WTC11 (cell line): ENCODE measurements at regions of chr9 and their contacts with region 1.

Region 1: GRCh38 chr9:127943731-127944144 is 6.1 kb upstream of the DPM2 start:
- DNase-seq: peak; percentile 96
- ATAC-seq: peak; percentile 84
- H3K4me3 Mint-ChIP-seq: no peak overlapping the region
- H3K27ac Mint-ChIP-seq: peak overlapping the region; percentile 58
- H3K4me1 Mint-ChIP-seq: peaks cover 22% of the 10 kb centered on the region
- H3K27me3 Mint-ChIP-seq: no peaks in the 10 kb centered on the region
- CTCF ChIP-seq: peak; percentile 84

Region 2: DNA sequence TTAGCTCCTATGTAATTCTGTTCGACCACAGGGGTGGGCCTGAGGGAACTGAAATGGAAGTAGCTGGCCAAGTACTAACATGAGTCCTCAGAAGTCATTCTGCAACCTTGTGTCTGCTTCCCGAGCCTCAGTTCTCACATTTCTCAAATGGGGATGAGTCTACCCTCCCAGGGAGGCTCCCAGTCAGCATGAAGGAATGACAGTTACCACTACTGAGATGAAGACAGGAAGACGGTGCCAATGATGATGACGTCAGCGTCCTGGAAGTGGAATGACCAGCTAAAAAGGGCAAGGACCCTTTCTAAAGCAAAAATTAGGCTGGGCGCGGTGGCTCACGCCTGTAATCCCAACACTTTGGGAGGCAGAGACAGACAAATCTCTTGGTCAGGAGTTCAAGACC is 20.0 kb before region 1 on chr9:
- CTCF ChIA-PET with region 1: interaction called, 78 read pairs
- POLR2A ChIA-PET with region 1: no interaction called
- DNase-seq: no peak
- ATAC-seq: no peak
- H3K4me3 Mint-ChIP-seq: no peak overlapping the region
- H3K27ac Mint-ChIP-seq: no peak overlapping the region
- H3K4me1 Mint-ChIP-seq: peaks cover 7% of the 10 kb centered on the region
- H3K27me3 Mint-ChIP-seq: peaks cover 24% of the 10 kb centered on the region
- CTCF ChIP-seq: no peak

Region 3: DNA sequence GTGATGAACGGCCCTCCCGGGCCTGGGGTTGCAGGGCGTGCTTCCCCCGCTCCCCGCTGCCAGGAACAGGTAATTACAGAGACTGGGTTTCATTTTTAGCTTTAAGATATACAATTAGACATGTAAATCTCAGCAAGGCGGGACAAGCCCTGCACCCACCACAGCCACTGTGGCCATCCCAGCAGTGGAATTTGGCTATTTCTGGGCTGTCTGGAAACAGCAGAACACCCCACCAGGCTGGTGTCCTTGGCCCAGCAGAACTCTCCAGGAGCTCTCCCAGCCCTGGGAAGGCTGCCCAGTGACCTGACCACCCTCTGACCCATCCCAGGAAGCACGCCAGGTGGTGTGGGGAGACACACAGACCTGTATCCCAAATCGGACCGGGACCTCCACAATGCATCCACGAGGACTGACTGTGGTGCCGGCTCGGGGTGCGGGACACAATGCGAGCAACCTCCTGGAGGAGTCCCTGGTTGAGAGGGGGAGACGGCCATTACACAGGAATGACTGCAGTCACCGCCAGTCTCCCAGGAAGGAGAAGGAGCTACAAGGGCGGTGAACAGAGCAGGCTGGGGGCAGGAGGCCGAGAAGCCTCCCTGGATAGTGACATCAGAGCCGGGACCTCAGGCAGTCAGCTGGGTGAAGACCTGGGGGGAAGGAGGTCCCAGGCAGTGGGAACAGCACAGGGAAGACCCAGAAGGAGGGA is 19.8 kb after region 1 on chr9:
- CTCF ChIA-PET with region 1: interaction called, 121 read pairs
- POLR2A ChIA-PET with region 1: no interaction called
- DNase-seq: no peak
- ATAC-seq: no peak
- H3K4me3 Mint-ChIP-seq: no peak overlapping the region
- H3K27ac Mint-ChIP-seq: peak overlapping the region; percentile 53; the same call in 1 of the 2 replicates
- H3K4me1 Mint-ChIP-seq: peaks cover 71% of the 10 kb centered on the region
- H3K27me3 Mint-ChIP-seq: no peaks in the 10 kb centered on the region
- CTCF ChIP-seq: no peak

Region 4: GRCh38 chr9:128007566-128008138 is 63.9 kb after region 1 on chr9:
- CTCF ChIA-PET with region 1: interaction called, 12 read pairs
- POLR2A ChIA-PET with region 1: no interaction called
- DNase-seq: no peak
- ATAC-seq: no peak
- H3K4me3 Mint-ChIP-seq: no peak overlapping the region
- H3K27ac Mint-ChIP-seq: peak overlapping the region; percentile 87
- H3K4me1 Mint-ChIP-seq: peaks cover 14% of the 10 kb centered on the region
- H3K27me3 Mint-ChIP-seq: peaks cover 4% of the 10 kb centered on the region; the same call in 1 of the 2 replicates
- CTCF ChIP-seq: no peak

Region 5: DNA sequence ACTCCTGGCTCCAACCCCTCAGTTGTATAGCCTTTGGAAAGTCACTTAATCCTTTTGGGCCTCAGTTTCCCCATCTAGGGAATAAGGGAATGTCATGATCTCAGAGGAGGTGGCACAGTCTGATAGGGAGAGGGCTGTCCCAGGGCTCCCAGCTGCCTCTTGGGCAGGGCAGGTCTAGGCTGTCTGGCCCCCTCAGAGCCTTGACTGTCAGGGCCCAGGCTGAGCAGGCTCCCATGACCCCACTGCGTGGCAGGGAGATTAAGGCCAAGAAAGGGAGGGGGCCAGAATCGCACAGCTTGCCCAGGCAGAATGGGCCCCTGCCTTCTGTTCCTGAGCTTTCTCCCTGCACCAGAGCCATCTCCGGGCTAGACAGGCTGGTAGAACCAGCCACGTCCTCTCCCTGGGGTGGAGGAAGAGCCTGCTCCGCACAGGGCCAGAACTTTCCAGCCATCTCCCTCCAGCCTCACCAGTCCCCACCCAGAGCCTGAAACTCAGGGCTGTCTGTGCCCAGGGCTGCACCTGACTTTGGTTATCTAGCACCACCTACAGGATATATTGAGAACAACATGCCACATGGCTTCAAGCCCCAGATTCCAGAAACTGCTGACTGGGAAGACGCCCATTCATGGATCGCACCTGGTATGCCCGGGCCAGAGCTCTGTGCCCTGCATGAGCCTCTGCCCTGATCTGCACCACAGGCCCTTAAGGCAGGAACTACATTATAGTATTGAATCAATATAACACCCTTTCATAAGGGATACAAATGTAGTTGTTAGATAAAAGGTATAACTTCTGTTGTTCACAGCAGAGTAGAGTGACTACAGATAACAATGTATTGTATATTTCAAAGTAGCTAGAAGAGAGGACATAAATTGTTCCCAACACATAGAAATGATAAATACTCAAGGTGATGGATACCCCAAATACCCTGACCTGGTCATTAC is 91.4 kb after region 1 on chr9:
- CTCF ChIA-PET with region 1: interaction called, 179 read pairs
- POLR2A ChIA-PET with region 1: interaction called, 4 read pairs
- DNase-seq: peak; percentile 80
- ATAC-seq: peak; percentile 98
- H3K4me3 Mint-ChIP-seq: no peak overlapping the region
- H3K27ac Mint-ChIP-seq: peak overlapping the region; percentile 6
- H3K4me1 Mint-ChIP-seq: 0 out of 2 replicates have a peak, but pooled peaks cover 2% of the 10 kb centered on the region
- H3K27me3 Mint-ChIP-seq: no peaks in the 10 kb centered on the region
- CTCF ChIP-seq: peak; percentile 93

Region 6: GRCh38 chr9:128067876-128068613 is 124.3 kb after region 1 on chr9 and contains the start of gene SLC25A25:
- CTCF ChIA-PET with region 1: interaction called, 31 read pairs
- POLR2A ChIA-PET with region 1: interaction called, 5 read pairs
- DNase-seq: peak; percentile 100
- ATAC-seq: peak; percentile 86
- H3K4me3 Mint-ChIP-seq: peak within 1 kb of the TSS; percentile 85
- H3K27ac Mint-ChIP-seq: peak within 1 kb of the TSS; percentile 67
- H3K4me1 Mint-ChIP-seq: peaks cover 38% of the 10 kb centered on the region
- H3K27me3 Mint-ChIP-seq: no peaks in the 10 kb centered on the region
- CTCF ChIP-seq: no peak
- total RNA-seq, gene SLC25A25: 15.2 to 17.4 TPM (median 15.2 TPM) in 3 replicates

Region 7: GRCh38 chr9:128150594-128151308 is 207.0 kb after region 1 on chr9:
- CTCF ChIA-PET with region 1: interaction called, 13 read pairs
- POLR2A ChIA-PET with region 1: no interaction called
- DNase-seq: peak; percentile 82
- ATAC-seq: peak; percentile 95
- H3K4me3 Mint-ChIP-seq: peak overlapping the region; percentile 25; the same call in 1 of the 2 replicates
- H3K27ac Mint-ChIP-seq: no peak overlapping the region
- H3K4me1 Mint-ChIP-seq: peaks cover 12% of the 10 kb centered on the region
- H3K27me3 Mint-ChIP-seq: peaks cover 7% of the 10 kb centered on the region; the same call in 1 of the 2 replicates
- CTCF ChIP-seq: peak; percentile 59